AG04449 (cell line): ENCODE measurements at regions of chrX and their contacts with region 1.

Region 1: GRCh38 chrX:150772150-150772970 is 79.2 kb downstream of the MTMR1 start:
- DNase-seq: no peak
- H3K4me3 ChIP-seq: no peak overlapping the region
- CTCF ChIP-seq: peak; percentile 89

Region 2: GRCh38 chrX:150616863-150617198 is 155.5 kb before region 1 on chrX:
- CTCF ChIA-PET with region 1: no interaction called
- POLR2A ChIA-PET with region 1: no interaction called
- DNase-seq: no peak
- H3K4me3 ChIP-seq: no peak overlapping the region
- CTCF ChIP-seq: no peak

Region 3: GRCh38 chrX:151004082-151004481 is 231.7 kb after region 1 on chrX:
- CTCF ChIA-PET with region 1: interaction called, 10 read pairs
- POLR2A ChIA-PET with region 1: no interaction called
- DNase-seq: no peak
- H3K4me3 ChIP-seq: no peak overlapping the region
- CTCF ChIP-seq: no peak

Region 4: DNA sequence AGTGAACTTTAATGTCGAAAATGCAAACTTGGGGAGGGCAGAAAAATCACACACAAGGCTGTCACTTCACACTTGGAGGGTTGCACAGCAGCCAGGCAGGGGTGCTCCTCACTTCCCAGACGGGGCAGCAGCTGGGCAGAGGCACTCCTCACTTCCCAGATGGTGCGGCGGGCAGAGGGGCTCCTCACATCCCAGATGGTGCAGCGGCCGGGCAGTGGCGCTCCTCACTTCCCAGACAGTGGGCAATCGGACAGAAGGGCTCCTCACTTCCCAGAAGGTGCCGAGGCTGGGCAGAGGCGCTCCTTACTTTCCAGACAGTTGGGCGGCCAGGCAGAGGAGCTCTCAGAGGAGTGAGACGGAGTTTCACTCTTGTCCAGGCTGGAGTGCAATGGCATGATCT is 301.4 kb after region 1 on chrX:
- CTCF ChIA-PET with region 1: interaction called, 208 read pairs
- POLR2A ChIA-PET with region 1: no interaction called
- DNase-seq: no peak
- H3K4me3 ChIP-seq: no peak overlapping the region
- CTCF ChIP-seq: no peak

Region 5: GRCh38 chrX:151082076-151082948 is 310.0 kb after region 1 on chrX:
- CTCF ChIA-PET with region 1: interaction called, 208 read pairs
- POLR2A ChIA-PET with region 1: no interaction called
- DNase-seq: no peak
- H3K4me3 ChIP-seq: peak overlapping the region; percentile 37
- CTCF ChIP-seq: peak; percentile 78